Activated B cell treated with CpG ODN at 0.5 μM for 24 hours (primary cell): ENCODE measurements at regions of chr11 and their contacts with region 1.

Region 1: GRCh38 chr11:18526521-18527296 is at the start of gene TSG101:
- DNase-seq: peak; percentile 95
- ATAC-seq: peak; percentile 84
- H3K4me3 Mint-ChIP-seq: peak within 1 kb of the TSS; percentile 100
- H3K27ac Mint-ChIP-seq: peak within 1 kb of the TSS; percentile 100
- H3K4me1 Mint-ChIP-seq: peaks cover 44% of the 10 kb centered on the region
- H3K27me3 Mint-ChIP-seq: no peaks in the 10 kb centered on the region
- CTCF ChIP-seq: no peak
- total RNA-seq, gene TSG101: 45.3 and 47.2 TPM in 2 replicates

Region 2: DNA sequence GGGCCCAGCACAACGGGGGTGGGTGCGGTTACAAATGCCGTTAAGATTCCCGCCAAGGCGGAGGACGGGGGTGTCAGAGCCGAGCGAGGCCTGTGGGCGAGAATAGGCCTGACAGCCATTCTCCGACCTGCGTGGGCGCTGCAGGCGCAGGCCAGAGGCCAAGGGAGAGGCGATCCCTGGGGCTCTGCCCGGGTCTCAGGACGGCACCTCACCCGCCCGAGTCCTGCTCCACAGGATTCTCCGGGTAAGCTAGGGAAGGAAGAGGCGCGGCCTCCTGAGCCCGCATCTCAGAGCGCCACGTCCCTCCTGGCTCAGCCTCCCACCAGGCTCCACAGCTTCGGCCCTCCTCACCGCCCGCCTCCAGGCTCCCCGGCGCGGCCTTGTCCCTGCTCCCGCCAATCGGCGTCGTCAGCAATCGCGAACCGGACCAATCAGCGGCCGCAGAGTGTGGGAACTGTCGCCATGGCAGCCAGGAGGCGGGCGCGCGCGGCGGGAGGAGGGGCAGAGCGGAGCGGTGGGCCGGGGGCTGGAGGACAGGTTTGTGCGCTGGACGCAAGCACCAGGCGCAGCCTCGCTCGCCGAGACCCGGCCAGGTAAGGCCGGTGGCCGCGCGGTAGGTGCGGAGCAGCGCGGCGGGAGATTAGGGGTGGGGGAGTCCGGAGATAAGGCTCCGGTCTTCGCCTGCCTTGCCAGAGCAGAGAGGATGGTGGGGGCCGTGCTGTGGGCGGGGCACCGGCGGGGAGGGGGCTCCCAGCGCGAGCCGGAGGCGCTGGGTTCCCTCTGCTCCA is 1250.3 kb before region 1 on chr11 and contains the start of gene NUCB2:
- CTCF ChIA-PET with region 1: no interaction called
- POLR2A ChIA-PET with region 1: no interaction called
- intact Hi-C with region 1: loop called (anchors 2 kb)
- DNase-seq: peak; percentile 95
- ATAC-seq: peak; percentile 97
- H3K4me3 Mint-ChIP-seq: peak within 1 kb of the TSS; percentile 96
- H3K27ac Mint-ChIP-seq: peak within 1 kb of the TSS; percentile 85
- H3K4me1 Mint-ChIP-seq: peaks cover 20% of the 10 kb centered on the region
- H3K27me3 Mint-ChIP-seq: peaks cover 2% of the 10 kb centered on the region
- CTCF ChIP-seq: no peak
- total RNA-seq, gene NUCB2: 6.2 and 6.8 TPM in 2 replicates

Region 3: GRCh38 chr11:18105802-18106574 is 420.7 kb before region 1 on chr11 and contains the start of gene SAAL1:
- CTCF ChIA-PET with region 1: no interaction called
- POLR2A ChIA-PET with region 1: interaction called, 14 read pairs
- intact Hi-C with region 1: loop called (anchors 2 kb)
- DNase-seq: peak; percentile 91
- ATAC-seq: peak; percentile 97
- H3K4me3 Mint-ChIP-seq: peak within 1 kb of the TSS; percentile 91
- H3K27ac Mint-ChIP-seq: peak within 1 kb of the TSS; percentile 76
- H3K4me1 Mint-ChIP-seq: peaks cover 28% of the 10 kb centered on the region
- H3K27me3 Mint-ChIP-seq: peaks cover 14% of the 10 kb centered on the region
- CTCF ChIP-seq: no peak
- total RNA-seq, gene SAAL1: 34.4 and 39.7 TPM in 2 replicates

Region 4: DNA sequence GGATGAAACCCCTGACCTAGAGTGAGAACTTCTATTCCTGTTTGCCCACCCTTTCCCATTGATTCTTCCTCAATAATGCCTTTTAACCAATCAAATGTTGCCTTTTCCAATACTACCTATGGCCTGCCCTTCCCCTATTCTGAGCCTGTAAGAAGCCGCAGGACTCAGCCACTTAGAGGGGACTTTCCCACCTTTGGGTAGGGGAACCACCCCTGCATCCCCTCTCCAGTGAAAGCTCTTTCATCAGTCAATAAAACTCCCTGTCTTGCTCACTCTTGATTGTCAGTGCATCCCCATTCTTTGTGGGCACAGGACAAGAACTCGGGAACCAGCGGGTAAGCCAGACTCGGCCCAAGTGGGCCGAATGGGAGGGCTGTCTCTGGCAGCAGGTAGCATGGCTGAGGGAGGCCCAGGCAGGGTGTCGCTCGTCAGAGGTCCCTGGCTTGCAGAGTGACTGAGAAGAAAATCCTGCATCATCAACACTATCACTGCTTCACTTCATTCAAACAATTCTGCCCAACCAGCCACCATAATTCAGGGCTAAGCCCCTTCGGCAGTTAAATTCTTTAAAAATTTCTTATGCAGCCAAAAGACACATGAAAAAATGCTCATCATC is 40.7 kb before region 1 on chr11:
- CTCF ChIA-PET with region 1: no interaction called
- POLR2A ChIA-PET with region 1: interaction called, 9 read pairs
- intact Hi-C with region 1: loop called (anchors 5 kb)
- DNase-seq: peak; percentile 20
- ATAC-seq: peak; percentile 98
- H3K4me3 Mint-ChIP-seq: peak overlapping the region; percentile 30
- H3K27ac Mint-ChIP-seq: peak overlapping the region; percentile 90
- H3K4me1 Mint-ChIP-seq: peaks cover 8% of the 10 kb centered on the region
- H3K27me3 Mint-ChIP-seq: no peaks in the 10 kb centered on the region
- CTCF ChIP-seq: no peak

Region 5: DNA sequence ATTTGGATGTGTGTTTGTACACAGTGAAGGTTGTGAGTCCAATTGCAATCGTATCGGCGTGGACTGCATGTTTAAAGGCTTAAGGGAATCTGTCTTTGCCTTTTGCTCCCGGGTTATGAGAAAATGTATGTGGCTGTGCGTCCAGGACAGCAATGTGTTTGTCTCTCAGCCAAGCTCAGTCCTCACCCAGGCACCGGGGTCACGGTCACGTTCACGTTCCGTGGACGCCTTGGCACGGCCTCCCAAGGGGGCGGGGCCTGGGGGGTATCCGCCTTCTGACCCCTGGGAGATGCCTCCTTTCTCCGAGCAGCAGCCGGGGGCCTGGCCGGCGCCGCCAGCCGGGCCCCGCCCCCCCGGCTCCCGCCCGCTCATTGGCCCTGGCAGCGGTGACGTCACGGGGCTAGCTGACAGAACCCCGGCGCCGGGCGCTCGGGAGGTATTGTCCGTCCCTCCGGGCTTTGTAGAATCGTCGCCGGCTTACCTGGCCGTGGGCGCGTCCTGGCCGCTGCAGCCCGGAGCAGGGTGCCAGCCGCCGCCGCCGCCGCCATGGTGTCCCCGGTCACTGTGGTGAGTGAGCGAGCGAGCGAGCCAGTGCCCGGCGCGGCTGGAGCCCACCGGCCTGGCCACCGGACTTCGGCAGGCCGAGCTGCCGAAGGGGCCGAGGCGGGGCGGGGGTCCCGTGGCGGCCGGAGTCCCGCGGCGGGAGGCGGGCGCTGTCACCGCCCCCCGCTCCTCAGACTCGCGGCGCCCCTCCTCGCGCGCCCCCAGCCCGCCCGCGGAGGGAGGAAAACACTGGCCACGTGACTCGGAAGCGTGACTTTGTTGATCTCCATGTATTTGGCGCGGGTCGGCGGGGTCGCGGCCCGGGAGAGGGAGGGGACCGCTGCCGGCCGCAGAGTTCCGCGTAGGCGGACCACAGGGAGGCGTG is 171.9 kb after region 1 on chr11 and contains the start of gene TMEM86A:
- CTCF ChIA-PET with region 1: no interaction called
- POLR2A ChIA-PET with region 1: no interaction called
- intact Hi-C with region 1: loop called (anchors 1 kb)
- DNase-seq: peak; percentile 83
- ATAC-seq: peak; percentile 98
- H3K4me3 Mint-ChIP-seq: peak within 1 kb of the TSS; percentile 80
- H3K27ac Mint-ChIP-seq: no peak within 1 kb of the TSS
- H3K4me1 Mint-ChIP-seq: peaks cover 17% of the 10 kb centered on the region
- H3K27me3 Mint-ChIP-seq: peaks cover 5% of the 10 kb centered on the region
- CTCF ChIP-seq: no peak
- total RNA-seq, gene TMEM86A: 0.10 and 0.13 TPM in 2 replicates